ENCODE measurements at regions of chr11 and their contacts with region 1.

Region 1: DNA sequence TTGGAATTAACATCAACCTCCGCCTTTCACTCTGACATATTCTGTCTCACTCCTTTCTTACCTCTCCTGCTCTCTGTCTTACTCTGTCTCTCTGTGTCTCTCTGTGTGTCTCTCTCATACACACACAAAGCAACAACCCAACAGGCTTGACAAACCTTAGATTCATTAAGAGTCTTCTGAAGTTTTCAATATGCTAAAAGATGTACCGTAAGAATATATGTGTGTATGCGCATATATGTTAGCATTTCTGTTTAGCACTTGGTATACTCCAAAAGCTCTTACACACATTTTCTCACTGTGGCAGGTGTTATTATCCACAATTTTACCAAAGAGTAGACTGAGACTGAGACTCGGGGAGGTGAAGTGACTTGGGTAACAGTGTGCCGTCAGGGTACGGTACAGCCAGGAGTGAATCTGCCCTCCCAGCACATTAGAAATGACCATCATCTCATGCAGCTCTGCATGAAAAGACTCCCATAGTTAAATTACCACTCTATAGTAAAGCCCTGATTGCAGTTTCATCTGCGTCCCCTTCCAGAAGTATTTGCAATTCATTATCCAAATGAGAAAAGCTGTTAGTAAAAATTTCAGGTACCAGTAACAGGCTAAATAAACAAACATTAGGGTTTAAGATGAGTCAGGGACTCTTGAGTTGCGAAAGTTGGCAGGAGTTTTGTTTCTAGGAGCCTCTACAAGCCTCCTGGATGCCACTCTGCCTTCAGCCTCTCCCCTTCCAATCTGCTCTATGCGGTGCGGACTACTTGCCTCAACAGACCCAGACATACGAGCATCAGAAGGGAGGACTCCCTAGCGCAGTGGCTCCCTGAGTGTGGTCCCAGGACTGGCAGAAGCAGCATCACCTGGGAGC is 195.2 kb upstream of the TMEM45B start:
- DNase-seq: no peak
- H3K4me3 ChIP-seq: no peak overlapping the region
- CTCF ChIP-seq: no peak
- POLR2A ChIP-seq: no peak

Region 2: GRCh38 chr11:129779342-129779741 is 158.9 kb after region 1 on chr11:
- intact Hi-C with region 1: no loop called
- DNase-seq: no peak
- H3K4me3 ChIP-seq: no peak overlapping the region
- CTCF ChIP-seq: no peak
- POLR2A ChIP-seq: no peak

Region 3: GRCh38 chr11:130150790-130151189 is 530.3 kb after region 1 on chr11:
- intact Hi-C with region 1: loop called (anchors 5 kb)
- DNase-seq: no peak
- H3K4me3 ChIP-seq: no peak overlapping the region
- CTCF ChIP-seq: no peak
- POLR2A ChIP-seq: no peak

Measured in lower leg skin (tissue), 4 donors.